CD8-positive, alpha-beta T cell (primary cell): ENCODE measurements at regions of chr3 and their contacts with region 1.

Region 1: DNA sequence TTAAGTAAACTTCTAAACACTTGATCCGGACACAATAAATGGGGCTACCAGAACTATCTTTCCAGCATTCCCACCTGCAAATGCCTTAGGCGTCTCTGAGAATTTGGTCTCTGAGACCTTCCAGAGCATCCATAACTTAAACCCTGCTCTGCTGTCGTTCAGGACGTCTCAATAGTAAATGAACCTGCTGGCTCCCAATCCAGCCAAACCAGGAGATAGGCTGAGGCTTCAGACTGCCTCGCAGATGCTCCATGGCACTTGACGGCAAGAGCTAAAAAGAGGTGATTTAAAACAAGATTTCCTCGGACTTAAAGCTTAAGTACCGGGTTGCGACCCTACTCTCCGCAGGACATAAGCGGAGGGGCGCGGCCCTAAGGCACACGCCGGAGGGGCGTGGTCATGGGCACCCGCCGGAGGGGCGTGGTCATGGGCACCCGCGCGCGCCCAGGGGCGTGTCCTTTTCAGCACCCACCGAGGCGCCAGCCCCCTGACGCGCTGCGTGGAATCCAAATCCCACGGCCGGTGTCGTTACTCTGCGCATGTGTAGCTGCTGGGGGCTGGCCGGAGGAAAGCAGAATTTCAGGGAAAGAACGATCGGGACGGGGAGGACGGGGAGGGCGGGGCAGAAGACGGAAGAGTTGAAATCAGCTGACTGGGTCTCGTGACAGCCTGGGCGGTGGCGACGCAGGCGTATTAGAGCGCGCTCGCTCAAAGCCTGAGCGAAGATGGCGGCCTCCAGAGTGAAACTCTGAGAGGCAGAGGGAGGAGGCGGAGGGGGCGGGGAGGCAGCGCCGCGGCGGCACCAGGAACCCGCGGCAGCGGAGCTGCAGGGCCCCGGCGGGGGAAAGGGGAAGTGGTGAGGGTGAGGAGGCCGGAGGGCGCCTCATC is at the start of gene DNAJC13:
- DNase-seq: peak; percentile 84 to 97 (median 91)
- ATAC-seq: peak; percentile 91
- H3K4me3 ChIP-seq: peak within 1 kb of the TSS; percentile 61 to 99
- H3K4me3 Mint-ChIP-seq: peak within 1 kb of the TSS; percentile 98
- H3K27ac ChIP-seq: peak within 1 kb of the TSS; percentile 67 to 90
- H3K27ac Mint-ChIP-seq: peak within 1 kb of the TSS; percentile 95
- H3K4me1 ChIP-seq: peaks cover 10% of the 10 kb centered on the region
- H3K4me1 Mint-ChIP-seq: peaks cover 32% of the 10 kb centered on the region
- H3K27me3 ChIP-seq: no peaks in the 10 kb centered on the region
- H3K27me3 Mint-ChIP-seq: no peaks in the 10 kb centered on the region
- CTCF ChIP-seq: no peak
- total RNA-seq, gene DNAJC13: 8.1 to 8.5 TPM

Region 2: GRCh38 chr3:130746246-130747039 is 1670.6 kb before region 1 on chr3 and contains the start of gene PIK3R4:
- CTCF ChIA-PET with region 1: no interaction called
- POLR2A ChIA-PET with region 1: no interaction called
- intact Hi-C with region 1: loop called (anchors 5 to 10 kb)
- DNase-seq: peak; percentile 85 to 99 (median 94)
- ATAC-seq: peak; percentile 80
- H3K4me3 ChIP-seq: peak within 1 kb of the TSS; percentile 75 to 95
- H3K4me3 Mint-ChIP-seq: peak within 1 kb of the TSS; percentile 87
- H3K27ac ChIP-seq: peak within 1 kb of the TSS; percentile 89 to 94
- H3K27ac Mint-ChIP-seq: peak within 1 kb of the TSS; percentile 92
- H3K4me1 ChIP-seq: peaks cover 35% of the 10 kb centered on the region
- H3K4me1 Mint-ChIP-seq: peaks cover 52% of the 10 kb centered on the region
- H3K27me3 ChIP-seq: no peaks in the 10 kb centered on the region
- H3K27me3 Mint-ChIP-seq: no peaks in the 10 kb centered on the region
- CTCF ChIP-seq: no peak
- total RNA-seq, gene PIK3R4: 12.1 to 14.8 TPM

Region 3: DNA sequence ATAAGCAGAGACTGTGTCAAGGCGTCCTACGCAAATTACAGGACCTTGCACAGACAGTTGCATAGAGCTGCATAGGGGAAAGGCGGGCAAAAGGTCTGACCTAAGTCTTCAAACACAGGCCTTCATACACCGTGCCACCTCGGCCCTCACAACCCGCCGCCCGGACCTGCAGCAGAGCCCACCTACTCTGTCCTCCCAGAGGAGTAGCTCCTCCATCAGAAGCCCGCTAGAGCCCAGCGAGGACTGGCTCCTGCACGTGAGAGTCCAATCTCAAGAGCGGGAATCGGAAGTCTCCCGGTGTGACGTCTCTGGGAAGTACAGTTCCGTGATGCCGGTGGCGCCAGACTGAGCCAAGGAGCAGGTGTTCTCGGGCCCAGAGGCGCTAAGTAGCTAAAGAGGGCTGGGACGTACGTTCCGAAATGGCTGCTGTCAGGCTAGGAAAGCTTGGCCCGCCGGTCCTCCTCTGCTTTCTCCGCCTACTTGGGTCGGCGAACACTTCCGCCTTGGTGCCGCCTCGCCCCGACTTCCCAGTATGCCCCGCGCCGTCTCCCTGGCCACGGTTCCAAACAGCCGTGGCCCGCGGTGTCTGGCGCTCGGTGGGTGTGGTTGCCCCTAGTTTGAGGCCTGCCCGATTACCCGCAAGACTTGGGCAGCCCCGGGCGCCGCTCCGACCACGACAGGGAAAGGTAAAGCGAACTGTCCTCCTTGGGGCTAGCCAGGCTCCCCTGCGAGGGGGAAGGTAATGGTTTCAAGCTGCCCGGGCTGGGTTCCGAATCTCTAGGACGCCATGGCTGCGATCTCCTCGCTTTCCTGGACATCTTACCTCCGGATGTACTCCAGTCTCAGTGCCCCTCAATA is 1390.5 kb before region 1 on chr3 and contains the starts of genes ASTE1 and NEK11:
- CTCF ChIA-PET with region 1: no interaction called
- POLR2A ChIA-PET with region 1: no interaction called
- intact Hi-C with region 1: loop called (anchors 1 to 2 kb)
- DNase-seq: peak; percentile 88 to 95 (median 92)
- ATAC-seq: peak; percentile 96
- H3K4me3 ChIP-seq: peak within 1 kb of the TSS; percentile 90 to 97
- H3K4me3 Mint-ChIP-seq: peak within 1 kb of the TSS; percentile 94
- H3K27ac ChIP-seq: peak within 1 kb of the TSS; percentile 91 to 96
- H3K27ac Mint-ChIP-seq: peak within 1 kb of the TSS; percentile 99
- H3K4me1 ChIP-seq: peaks cover 49% of the 10 kb centered on the region
- H3K4me1 Mint-ChIP-seq: peaks cover 52% of the 10 kb centered on the region
- H3K27me3 ChIP-seq: no peaks in the 10 kb centered on the region
- H3K27me3 Mint-ChIP-seq: no peaks in the 10 kb centered on the region
- CTCF ChIP-seq: no peak
- total RNA-seq, gene ASTE1: 24.6 to 25.9 TPM
- total RNA-seq, gene NEK11: 3.6 to 3.8 TPM

Region 4: GRCh38 chr3:131502530-131503245 is 914.4 kb before region 1 on chr3 and contains the start of gene MRPL3:
- CTCF ChIA-PET with region 1: no interaction called
- POLR2A ChIA-PET with region 1: no interaction called
- intact Hi-C with region 1: loop called (anchors 5 kb)
- DNase-seq: peak; percentile 67 to 92 (median 84)
- ATAC-seq: peak; percentile 88
- H3K4me3 ChIP-seq: peak within 1 kb of the TSS; percentile 74 to 95
- H3K4me3 Mint-ChIP-seq: peak within 1 kb of the TSS; percentile 97
- H3K27ac ChIP-seq: peak within 1 kb of the TSS; percentile 78 to 83
- H3K27ac Mint-ChIP-seq: peak within 1 kb of the TSS; percentile 95
- H3K4me1 ChIP-seq: peaks cover 27% of the 10 kb centered on the region
- H3K4me1 Mint-ChIP-seq: peaks cover 45% of the 10 kb centered on the region
- H3K27me3 ChIP-seq: no peaks in the 10 kb centered on the region
- H3K27me3 Mint-ChIP-seq: no peaks in the 10 kb centered on the region
- CTCF ChIP-seq: no peak
- total RNA-seq, gene MRPL3: 43.6 to 45.0 TPM

Region 5: GRCh38 chr3:132161608-132162007 is 255.4 kb before region 1 on chr3:
- CTCF ChIA-PET with region 1: no interaction called
- POLR2A ChIA-PET with region 1: no interaction called
- intact Hi-C with region 1: no loop called
- DNase-seq: no peak
- ATAC-seq: no peak
- H3K4me3 ChIP-seq: no peak overlapping the region
- H3K4me3 Mint-ChIP-seq: no peak overlapping the region
- H3K27ac ChIP-seq: no peak overlapping the region
- H3K27ac Mint-ChIP-seq: no peak overlapping the region
- H3K4me1 ChIP-seq: no peaks in the 10 kb centered on the region
- H3K4me1 Mint-ChIP-seq: no peaks in the 10 kb centered on the region
- H3K27me3 ChIP-seq: no peaks in the 10 kb centered on the region
- H3K27me3 Mint-ChIP-seq: peaks cover 3% of the 10 kb centered on the region
- CTCF ChIP-seq: no peak

Region 6: GRCh38 chr3:132332508-132332907 is 84.5 kb before region 1 on chr3:
- CTCF ChIA-PET with region 1: no interaction called
- POLR2A ChIA-PET with region 1: no interaction called
- intact Hi-C with region 1: no loop called
- DNase-seq: no peak
- ATAC-seq: no peak
- H3K4me3 ChIP-seq: no peak overlapping the region
- H3K4me3 Mint-ChIP-seq: no peak overlapping the region
- H3K27ac ChIP-seq: no peak overlapping the region
- H3K27ac Mint-ChIP-seq: no peak overlapping the region
- H3K4me1 ChIP-seq: no peaks in the 10 kb centered on the region
- H3K4me1 Mint-ChIP-seq: no peaks in the 10 kb centered on the region
- H3K27me3 ChIP-seq: no peaks in the 10 kb centered on the region
- H3K27me3 Mint-ChIP-seq: peaks cover 13% of the 10 kb centered on the region
- CTCF ChIP-seq: no peak

Region 7: GRCh38 chr3:133457465-133458067 is 1040.5 kb after region 1 on chr3:
- CTCF ChIA-PET with region 1: no interaction called
- POLR2A ChIA-PET with region 1: no interaction called
- intact Hi-C with region 1: no loop called
- DNase-seq: no peak
- ATAC-seq: no peak
- H3K4me3 ChIP-seq: no peak overlapping the region
- H3K4me3 Mint-ChIP-seq: no peak overlapping the region
- H3K27ac ChIP-seq: no peak overlapping the region
- H3K27ac Mint-ChIP-seq: no peak overlapping the region
- H3K4me1 ChIP-seq: peaks cover 11% of the 10 kb centered on the region
- H3K4me1 Mint-ChIP-seq: peaks cover 13% of the 10 kb centered on the region
- H3K27me3 ChIP-seq: no peaks in the 10 kb centered on the region
- H3K27me3 Mint-ChIP-seq: no peaks in the 10 kb centered on the region
- CTCF ChIP-seq: peak; percentile 25

Region 8: DNA sequence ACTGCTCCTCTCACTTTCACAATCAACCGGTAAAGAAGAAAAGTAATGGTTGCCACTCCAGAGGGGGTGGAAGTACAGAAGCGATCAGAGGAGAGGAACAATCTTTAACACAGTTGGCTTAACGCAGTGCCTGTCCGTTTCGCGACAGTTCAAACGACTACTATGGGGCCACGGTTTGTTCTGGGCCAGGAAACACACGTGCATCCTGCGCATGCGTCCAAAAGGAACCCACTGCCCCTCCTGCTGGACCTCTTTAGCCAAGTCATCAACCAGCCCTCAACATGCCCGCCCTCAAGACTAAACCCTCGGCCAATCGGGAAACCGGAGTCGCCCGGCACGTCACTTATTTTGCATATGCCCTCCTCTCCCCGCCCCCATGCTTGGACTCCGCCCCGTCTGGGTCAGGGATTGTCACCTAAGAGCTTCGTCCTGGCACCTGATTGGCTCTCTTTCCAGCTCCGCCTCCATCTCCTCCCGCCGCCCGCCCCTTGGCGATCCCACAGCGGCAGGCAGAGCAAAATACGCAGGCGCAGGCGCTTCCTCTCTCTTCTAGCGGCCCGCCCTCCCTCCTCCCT is 1156.1 kb after region 1 on chr3:
- CTCF ChIA-PET with region 1: no interaction called
- POLR2A ChIA-PET with region 1: no interaction called
- intact Hi-C with region 1: loop called in 1 of 2 experiments (anchors 5 kb)
- DNase-seq: peak; percentile 100
- ATAC-seq: peak; percentile 83
- H3K4me3 ChIP-seq: peak overlapping the region; percentile 45 to 58
- H3K4me3 Mint-ChIP-seq: peak overlapping the region; percentile 89
- H3K27ac ChIP-seq: peak overlapping the region; percentile 76 to 93
- H3K27ac Mint-ChIP-seq: peak overlapping the region; percentile 99
- H3K4me1 ChIP-seq: peaks cover 38% of the 10 kb centered on the region
- H3K4me1 Mint-ChIP-seq: peaks cover 58% of the 10 kb centered on the region
- H3K27me3 ChIP-seq: no peaks in the 10 kb centered on the region
- H3K27me3 Mint-ChIP-seq: no peaks in the 10 kb centered on the region
- CTCF ChIP-seq: no peak

Region 9: GRCh38 chr3:133805527-133806475 is 1388.8 kb after region 1 on chr3 and contains the start of gene SRPRB:
- CTCF ChIA-PET with region 1: no interaction called
- POLR2A ChIA-PET with region 1: no interaction called
- intact Hi-C with region 1: loop called in 1 of 2 experiments (anchors 5 kb)
- DNase-seq: peak; percentile 92 to 98 (median 95)
- ATAC-seq: peak; percentile 94
- H3K4me3 ChIP-seq: peak within 1 kb of the TSS; percentile 81 to 91
- H3K4me3 Mint-ChIP-seq: peak within 1 kb of the TSS; percentile 97
- H3K27ac ChIP-seq: peak within 1 kb of the TSS; percentile 77 to 81
- H3K27ac Mint-ChIP-seq: peak within 1 kb of the TSS; percentile 96
- H3K4me1 ChIP-seq: peaks cover 18% of the 10 kb centered on the region
- H3K4me1 Mint-ChIP-seq: peaks cover 37% of the 10 kb centered on the region
- H3K27me3 ChIP-seq: no peaks in the 10 kb centered on the region
- H3K27me3 Mint-ChIP-seq: peaks cover 4% of the 10 kb centered on the region
- CTCF ChIP-seq: no peak
- total RNA-seq, gene SRPRB: 25.7 to 30.1 TPM

Region 10: GRCh38 chr3:134250717-134251220 is 1833.7 kb after region 1 on chr3 and contains the start of gene RYK:
- CTCF ChIA-PET with region 1: no interaction called
- POLR2A ChIA-PET with region 1: no interaction called
- intact Hi-C with region 1: loop called in 1 of 2 experiments (anchors 10 kb)
- DNase-seq: peak; percentile 50 to 89 (median 73)
- ATAC-seq: peak; percentile 74
- H3K4me3 ChIP-seq: peak within 1 kb of the TSS; percentile 76 to 86
- H3K4me3 Mint-ChIP-seq: peak within 1 kb of the TSS; percentile 94
- H3K27ac ChIP-seq: peak within 1 kb of the TSS; percentile 65 to 68
- H3K27ac Mint-ChIP-seq: peak within 1 kb of the TSS; percentile 94
- H3K4me1 ChIP-seq: peaks cover 17% of the 10 kb centered on the region
- H3K4me1 Mint-ChIP-seq: peaks cover 44% of the 10 kb centered on the region
- H3K27me3 ChIP-seq: no peaks in the 10 kb centered on the region
- H3K27me3 Mint-ChIP-seq: no peaks in the 10 kb centered on the region
- CTCF ChIP-seq: no peak
- total RNA-seq, gene RYK: 63.6 to 64.7 TPM